ENCODE measurements at regions of chr6 and their contacts with region 1.

Region 1: DNA sequence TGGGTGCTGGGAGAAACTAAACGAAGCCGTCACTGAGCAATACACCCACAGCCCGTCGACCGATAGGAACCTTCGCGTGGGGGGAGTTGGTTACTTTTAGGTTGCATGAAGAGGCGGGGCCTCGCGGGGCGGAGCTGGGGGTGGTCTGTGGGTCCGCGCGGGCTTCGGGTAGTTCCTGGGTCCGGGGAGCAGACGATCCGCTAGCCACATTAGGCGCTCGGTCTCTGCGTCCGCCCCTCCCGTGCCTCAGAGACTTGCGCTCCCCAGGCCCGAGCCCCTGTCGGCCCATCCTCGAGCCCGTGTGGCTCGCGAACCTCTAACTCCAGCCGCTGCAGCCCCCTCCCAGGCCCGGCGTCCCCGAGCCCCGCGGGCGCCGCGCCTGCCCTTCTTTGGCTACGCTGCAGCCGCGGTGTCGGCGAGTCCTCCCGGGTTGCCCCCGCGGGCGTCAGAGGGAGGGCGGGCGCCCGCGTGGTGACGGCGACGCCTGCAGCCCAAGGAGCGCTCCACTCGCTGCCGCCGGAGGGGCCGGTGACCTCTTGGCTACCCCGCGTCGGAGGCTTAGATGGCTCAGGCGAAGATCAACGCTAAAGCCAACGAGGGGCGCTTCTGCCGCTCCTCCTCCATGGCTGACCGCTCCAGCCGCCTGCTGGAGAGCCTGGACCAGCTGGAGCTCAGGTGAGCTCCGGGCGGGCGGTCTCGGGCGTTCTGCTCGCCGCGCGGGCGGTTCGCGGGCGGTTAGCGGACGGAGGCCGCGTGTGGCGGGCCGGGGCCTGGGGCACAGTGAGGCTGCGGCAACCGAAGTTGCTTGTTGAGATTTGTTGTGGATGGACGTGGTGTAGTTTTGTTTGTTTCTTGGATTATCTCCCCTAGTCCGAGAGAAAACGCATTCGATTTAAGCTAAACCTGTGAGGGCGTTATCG is at the start of gene BAG2:
- DNase-seq: peak; percentile 88
- H3K4me3 Mint-ChIP-seq: peak within 1 kb of the TSS; percentile 93
- H3K27ac Mint-ChIP-seq: peak within 1 kb of the TSS; percentile 95
- H3K4me1 Mint-ChIP-seq: peaks cover 45% of the 10 kb centered on the region
- H3K27me3 Mint-ChIP-seq: no peaks in the 10 kb centered on the region
- total RNA-seq, gene BAG2: 12.3 and 13.1 TPM in 2 replicates

Region 2: GRCh38 chr6:56542364-56543331 is 629.7 kb before region 1 on chr6:
- intact Hi-C with region 1: loop called (anchors 1 kb)
- DNase-seq: peak; percentile 66
- H3K4me3 Mint-ChIP-seq: no peak overlapping the region
- H3K27ac Mint-ChIP-seq: no peak overlapping the region
- H3K4me1 Mint-ChIP-seq: no peaks in the 10 kb centered on the region
- H3K27me3 Mint-ChIP-seq: peaks cover 11% of the 10 kb centered on the region

Region 3: DNA sequence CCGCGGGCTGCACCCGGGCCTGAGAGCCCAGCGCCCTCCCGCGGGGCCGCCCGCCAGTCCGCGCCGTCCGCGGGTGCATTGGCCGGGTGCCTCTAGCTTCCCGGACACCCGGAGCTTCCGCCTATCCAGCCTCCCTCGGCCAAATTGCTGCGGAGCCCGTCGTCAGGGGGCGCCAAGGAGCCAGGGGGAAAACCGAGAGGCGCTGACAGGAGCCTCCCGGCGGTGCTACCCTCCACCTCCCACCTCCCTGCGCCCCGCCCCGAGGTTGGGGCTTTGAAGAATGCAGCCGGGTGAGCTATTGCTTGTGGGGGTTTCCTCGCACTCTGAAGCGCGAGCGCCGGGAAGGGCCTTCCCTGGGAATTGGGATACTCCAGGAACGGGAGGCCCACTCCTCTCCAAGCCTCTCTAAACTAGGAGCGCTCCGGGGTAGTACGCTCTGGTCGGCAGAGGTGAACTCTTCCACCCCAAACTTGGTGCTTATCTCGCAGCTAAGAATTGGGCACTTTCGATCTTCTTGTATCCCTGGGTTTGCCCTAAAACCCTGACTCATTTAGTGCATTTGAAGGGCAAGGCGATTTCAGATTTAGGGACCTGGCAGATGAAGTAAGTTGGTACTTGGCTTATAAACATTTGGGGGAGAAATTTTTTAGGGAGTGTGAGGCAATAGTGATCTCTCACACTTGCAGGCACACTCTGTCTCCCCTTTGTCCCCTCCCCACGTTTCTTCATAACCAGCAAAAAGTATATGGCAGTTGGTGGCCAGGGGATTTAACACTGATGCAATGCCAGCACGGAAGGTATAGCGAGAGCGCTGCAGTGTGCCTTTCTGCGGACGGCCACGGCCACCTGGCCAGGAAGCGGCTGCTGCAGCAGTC is 217.0 kb before region 1 on chr6:
- intact Hi-C with region 1: loop called (anchors 1 kb)
- DNase-seq: peak; percentile 62
- H3K4me3 Mint-ChIP-seq: peak overlapping the region; percentile 84
- H3K27ac Mint-ChIP-seq: peak overlapping the region; percentile 70
- H3K4me1 Mint-ChIP-seq: peaks cover 19% of the 10 kb centered on the region
- H3K27me3 Mint-ChIP-seq: peaks cover 57% of the 10 kb centered on the region

Region 4: GRCh38 chr6:57089687-57090460 is 82.5 kb before region 1 on chr6 and contains the start of gene ZNF451:
- intact Hi-C with region 1: loop called (anchors 1 kb)
- DNase-seq: peak; percentile 95
- H3K4me3 Mint-ChIP-seq: peak within 1 kb of the TSS; percentile 88
- H3K27ac Mint-ChIP-seq: peak within 1 kb of the TSS; percentile 72
- H3K4me1 Mint-ChIP-seq: peaks cover 35% of the 10 kb centered on the region
- H3K27me3 Mint-ChIP-seq: no peaks in the 10 kb centered on the region
- total RNA-seq, gene ZNF451: 58.1 and 64.4 TPM in 2 replicates

Region 5: DNA sequence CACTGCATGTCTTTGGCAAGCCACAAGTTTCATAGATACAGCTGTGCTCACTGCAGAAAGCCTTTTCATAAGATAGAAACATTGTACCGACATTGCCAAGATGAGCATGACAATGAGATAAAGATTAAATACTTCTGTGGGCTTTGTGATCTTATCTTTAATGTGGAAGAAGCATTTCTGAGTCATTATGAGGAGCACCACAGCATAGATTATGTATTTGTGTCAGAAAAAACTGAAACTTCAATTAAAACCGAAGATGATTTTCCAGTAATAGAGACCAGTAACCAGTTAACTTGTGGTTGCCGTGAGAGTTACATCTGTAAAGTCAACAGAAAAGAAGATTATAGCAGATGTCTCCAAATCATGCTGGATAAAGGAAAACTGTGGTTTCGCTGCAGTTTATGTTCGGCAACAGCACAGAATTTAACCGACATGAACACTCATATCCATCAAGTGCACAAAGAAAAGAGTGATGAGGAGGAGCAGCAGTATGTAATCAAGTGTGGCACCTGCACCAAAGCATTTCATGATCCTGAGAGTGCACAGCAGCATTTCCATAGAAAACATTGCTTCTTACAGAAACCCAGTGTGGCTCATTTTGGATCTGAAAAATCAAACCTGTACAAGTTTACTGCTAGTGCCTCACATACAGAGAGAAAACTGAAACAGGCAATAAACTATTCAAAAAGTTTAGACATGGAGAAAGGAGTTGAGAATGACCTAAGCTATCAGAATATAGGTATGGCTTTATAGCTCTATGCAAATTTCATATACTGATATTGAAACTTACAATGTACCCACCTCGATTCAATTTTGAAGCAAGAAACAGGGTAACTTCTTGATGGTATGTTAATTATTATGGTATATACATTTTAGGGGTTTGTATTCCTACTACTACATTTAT is 24.2 kb before region 1 on chr6:
- intact Hi-C with region 1: loop called (anchors 1 kb)
- DNase-seq: no peak
- H3K4me3 Mint-ChIP-seq: peak overlapping the region; percentile 53
- H3K27ac Mint-ChIP-seq: peak overlapping the region; percentile 89
- H3K4me1 Mint-ChIP-seq: peaks cover 25% of the 10 kb centered on the region
- H3K27me3 Mint-ChIP-seq: no peaks in the 10 kb centered on the region

Region 6: DNA sequence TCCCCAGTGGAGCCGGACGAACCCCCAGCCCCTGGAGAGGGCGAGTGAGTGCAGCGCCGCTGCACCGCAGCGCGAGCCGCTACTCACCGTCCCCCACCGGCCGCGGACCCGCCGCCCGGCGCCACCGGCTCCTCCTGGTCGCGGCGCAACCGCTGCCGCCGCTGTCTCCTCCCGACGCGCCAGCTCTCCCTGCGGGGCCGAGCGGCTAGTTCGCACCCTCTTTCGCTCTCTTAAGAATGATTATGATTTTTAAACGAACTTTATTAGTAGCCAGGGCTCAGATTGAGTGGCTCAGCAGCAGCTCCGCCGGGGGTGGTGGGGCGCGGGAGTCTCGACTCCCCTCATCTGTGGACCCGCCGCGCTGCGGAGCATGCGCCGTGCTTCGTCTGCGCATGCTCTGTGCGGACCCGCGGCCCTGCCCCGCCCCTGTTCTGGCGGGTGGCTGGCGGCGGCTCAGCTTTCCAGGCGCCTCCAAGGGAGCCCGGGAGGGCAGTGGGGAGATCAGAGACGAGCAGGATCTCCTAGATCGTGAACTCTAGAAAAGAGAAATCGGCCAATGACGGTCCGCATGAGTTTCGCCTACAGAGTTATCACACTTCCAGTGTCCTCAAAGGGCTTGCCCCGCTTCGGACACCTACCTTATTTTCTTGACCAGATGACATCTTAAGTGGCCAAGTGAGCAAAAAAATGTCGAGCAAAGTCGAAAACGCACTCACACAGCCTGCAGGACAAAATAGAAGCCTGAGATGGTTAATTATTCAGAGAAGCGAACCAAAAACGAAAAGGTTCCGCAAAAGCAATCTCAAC is 49.7 kb after region 1 on chr6 and contains the start of gene RAB23:
- intact Hi-C with region 1: loop called (anchors 1 kb)
- DNase-seq: peak; percentile 85
- H3K4me3 Mint-ChIP-seq: peak within 1 kb of the TSS; percentile 94
- H3K27ac Mint-ChIP-seq: peak within 1 kb of the TSS; percentile 94
- H3K4me1 Mint-ChIP-seq: peaks cover 39% of the 10 kb centered on the region
- H3K27me3 Mint-ChIP-seq: peaks cover 30% of the 10 kb centered on the region
- total RNA-seq, gene RAB23: 3.0 and 3.8 TPM in 2 replicates

Measured in activated T-helper 1 cell treated with anti-CD3 and anti-CD28 coated beads, Interleukin-12 subunit alpha, Interleukin-12 subunit beta, Interleukin-2, Interleukin-4 antibody, amounts not matched to agents 30 ng/mL and 10 ng/mL and 1 ng/mL, durations not matched to agents 14 hours and 24 hours and 36 hours (primary cell).